Ovary (tissue), 10 donors: ENCODE measurements at regions of chr19 and their contacts with region 1.

Region 1: GRCh38 chr19:40465557-40466150 is at the start of gene BLVRB:
- DNase-seq: peak; percentile 100
- H3K4me3 ChIP-seq: peak within 1 kb of the TSS; percentile 70
- H3K27ac ChIP-seq: peak within 1 kb of the TSS; percentile 79 to 82
- H3K4me1 ChIP-seq: peaks cover 8% of the 10 kb centered on the region
- H3K27me3 ChIP-seq: no peaks in the 10 kb centered on the region
- CTCF ChIP-seq: peak in 1 of 3 donors; percentile 5
- EP300 ChIP-seq: no peak
- POLR2A ChIP-seq: peak; percentile 94
- total RNA-seq, gene BLVRB: 64.0 to 135 (median 75.5) TPM

Region 2: GRCh38 chr19:40570313-40571004 is 104.8 kb after region 1 on chr19:
- intact Hi-C with region 1: loop called in 1 of 4 experiments (anchors 10 kb)
- DNase-seq: peak; percentile 99
- H3K4me3 ChIP-seq: peak overlapping the region; percentile 41
- H3K27ac ChIP-seq: peak overlapping the region; percentile 40 to 42
- H3K4me1 ChIP-seq: peaks cover 4% of the 10 kb centered on the region
- H3K27me3 ChIP-seq: no peaks in the 10 kb centered on the region
- CTCF ChIP-seq: no peak
- EP300 ChIP-seq: no peak
- POLR2A ChIP-seq: no peak

Region 3: DNA sequence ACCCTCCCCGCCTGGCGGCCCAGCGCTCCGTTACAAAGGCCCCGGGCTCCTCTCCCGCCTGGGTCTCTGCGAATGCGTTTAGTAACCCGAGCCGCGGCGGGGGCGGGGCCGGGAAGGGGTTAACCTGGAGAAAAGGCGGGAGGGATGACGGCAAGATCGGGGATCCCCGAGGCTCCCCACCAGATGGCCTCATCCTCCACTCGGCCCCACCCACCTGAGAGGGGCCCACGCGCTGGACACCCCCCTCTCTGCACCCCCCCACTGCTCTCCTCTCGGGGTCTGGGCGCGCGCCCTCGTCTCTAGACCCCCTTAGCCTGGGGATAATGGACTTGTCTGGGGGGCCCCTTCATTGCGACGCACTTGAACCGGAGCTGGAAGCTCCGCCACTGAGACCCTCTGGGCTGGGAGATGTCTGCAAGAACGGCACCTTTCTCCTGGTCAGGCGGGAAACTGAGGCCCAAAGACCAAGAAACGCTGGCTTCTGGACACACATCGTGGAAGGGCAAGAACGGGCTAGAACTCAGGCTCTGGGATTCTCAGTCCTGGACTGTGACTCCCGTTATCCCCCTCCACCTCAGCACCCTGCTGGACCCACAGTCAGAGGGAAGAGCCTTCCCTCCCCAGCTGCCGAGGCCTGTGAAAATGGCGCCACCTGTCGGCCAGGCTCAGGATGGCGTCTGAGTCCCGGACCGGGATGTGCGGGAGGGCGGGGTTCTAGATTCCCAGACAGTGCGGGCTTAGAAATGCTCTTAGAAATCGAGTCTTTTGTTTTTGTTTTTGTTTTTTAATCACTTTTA is 132.7 kb after region 1 on chr19:
- intact Hi-C with region 1: loop called in 3 of 4 experiments (anchors 10 kb)
- DNase-seq: peak; percentile 87 to 95 (median 94)
- H3K4me3 ChIP-seq: peak overlapping the region; percentile 38
- H3K27ac ChIP-seq: peak overlapping the region; percentile 63 to 70
- H3K4me1 ChIP-seq: peaks cover 4% of the 10 kb centered on the region
- H3K27me3 ChIP-seq: no peaks in the 10 kb centered on the region
- CTCF ChIP-seq: peak; percentile 97 to 98 (median 98)
- EP300 ChIP-seq: no peak
- POLR2A ChIP-seq: peak; percentile 54

Region 4: GRCh38 chr19:40603389-40604135 is 137.9 kb after region 1 on chr19:
- intact Hi-C with region 1: loop called in 3 of 4 experiments (anchors 10 kb)
- DNase-seq: peak; percentile 98 to 99 (median 99)
- H3K4me3 ChIP-seq: peak overlapping the region; percentile 60
- H3K27ac ChIP-seq: peak overlapping the region; percentile 87 to 92
- H3K4me1 ChIP-seq: peaks cover 13% of the 10 kb centered on the region
- H3K27me3 ChIP-seq: no peaks in the 10 kb centered on the region
- CTCF ChIP-seq: peak in 1 of 3 donors; percentile 28
- EP300 ChIP-seq: peak; percentile 9
- POLR2A ChIP-seq: peak; percentile 59